ENCODE measurements at regions of chr10 and their contacts with region 1.

Region 1: DNA sequence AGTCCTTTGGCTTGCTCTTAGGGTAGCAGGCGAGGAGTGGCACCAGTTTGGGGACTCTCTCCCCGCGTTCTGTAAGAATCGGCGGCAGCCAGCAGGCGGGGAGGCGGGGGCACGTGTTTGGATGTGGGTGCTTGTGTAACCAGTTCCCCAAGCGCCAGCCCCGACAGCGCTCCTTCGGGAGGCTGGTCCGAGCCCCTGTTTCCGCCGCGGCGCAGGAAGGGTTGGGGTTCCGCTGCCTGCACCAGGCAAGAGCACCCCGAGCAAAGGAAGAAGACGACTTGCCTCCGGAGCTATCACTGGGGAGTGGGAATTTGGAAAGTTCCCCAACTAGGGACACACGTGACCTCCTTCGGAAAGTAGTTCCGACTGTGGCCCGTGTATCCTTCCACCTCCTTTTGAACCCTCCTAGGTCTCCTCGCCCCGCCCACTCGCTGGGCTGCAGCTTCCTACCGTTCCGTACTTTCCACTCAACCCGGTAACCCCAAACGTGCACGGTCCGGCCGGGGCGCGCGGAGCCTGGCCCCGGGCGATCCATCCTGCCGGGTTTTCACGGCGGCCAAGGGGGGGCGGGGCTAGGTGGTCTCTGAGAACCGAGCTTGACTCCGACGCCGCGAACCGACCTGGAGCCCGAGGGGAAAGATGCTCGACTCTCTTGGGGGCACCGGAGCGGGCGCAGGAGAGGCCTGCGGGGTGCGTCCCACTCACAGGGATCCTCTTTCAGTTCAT is 1.2 kb downstream of the KLLN start:
- DNase-seq: peak; percentile 99 to 100 (median 100)
- H3K4me3 ChIP-seq: peak overlapping the region; percentile 63 to 99 (median 95)
- H3K27ac ChIP-seq: peak overlapping the region; percentile 77 to 88
- H3K4me1 ChIP-seq: peaks cover 8 to 25% (median 20%) of the 10 kb centered on the region in 4 experiments
- H3K27me3 ChIP-seq: no peaks in the 10 kb centered on the region

Region 2: DNA sequence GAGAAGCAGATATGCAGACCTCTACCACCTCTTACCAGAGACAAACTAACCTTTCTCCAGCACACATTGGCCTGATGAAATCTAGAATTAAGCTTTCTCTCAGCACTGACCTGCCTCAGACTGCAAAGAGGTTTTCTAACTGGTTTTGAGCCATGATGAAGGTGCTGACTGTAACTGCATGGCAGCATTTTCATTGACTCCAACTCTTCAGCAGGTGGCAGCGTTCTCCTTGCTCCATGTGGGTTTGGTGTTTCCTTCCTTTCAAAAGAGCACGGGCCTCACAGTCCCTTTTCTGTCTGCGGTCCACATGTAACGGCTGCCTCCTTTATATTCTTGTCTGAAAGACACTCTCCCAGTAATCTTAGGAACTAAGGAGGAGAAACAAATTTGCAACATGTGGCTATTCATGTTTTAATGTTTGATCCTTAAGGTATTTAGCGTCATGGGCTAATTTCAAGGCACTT is 11.3 kb before region 1 on chr10:
- CTCF ChIA-PET with region 1: interaction called, 23 read pairs
- POLR2A ChIA-PET with region 1: interaction called, 3 read pairs
- DNase-seq: peak; percentile 75 to 85 (median 83)
- H3K4me3 ChIP-seq: peak overlapping the region in 1 of 7 experiments; percentile 3
- H3K27ac ChIP-seq: no peak overlapping the region
- H3K4me1 ChIP-seq: peaks cover 5 to 17% (median 11%) of the 10 kb centered on the region in 4 experiments
- H3K27me3 ChIP-seq: no peaks in the 10 kb centered on the region

Region 3: DNA sequence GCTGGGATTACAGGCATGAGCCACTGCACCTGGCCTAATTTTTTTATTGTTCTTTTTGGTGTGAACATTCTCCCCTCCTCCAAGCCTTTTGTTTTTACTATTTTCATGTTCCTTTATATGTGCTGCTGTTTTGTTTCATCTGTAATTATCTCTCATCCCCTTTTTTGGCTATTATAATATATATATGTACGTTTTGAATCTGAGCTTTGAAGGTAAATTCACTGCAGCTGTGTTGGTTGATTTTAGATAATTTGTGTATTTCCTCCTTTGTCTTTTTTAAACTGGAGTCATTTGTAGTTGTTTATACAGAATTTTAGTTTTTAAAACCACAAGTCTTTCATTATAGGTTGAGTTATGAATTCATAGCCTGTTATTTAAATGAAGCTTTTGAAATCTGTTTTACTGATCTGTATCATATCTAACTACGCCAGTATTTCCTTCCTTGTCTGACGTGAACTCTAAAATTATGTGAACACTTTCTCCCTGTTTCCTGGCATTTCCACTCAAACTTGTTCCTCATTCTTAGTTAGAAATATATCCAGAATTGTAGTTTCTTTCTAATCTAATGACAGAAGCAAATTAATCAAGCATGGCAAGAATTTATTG is 56.2 kb after region 1 on chr10:
- CTCF ChIA-PET with region 1: interaction called, 13 read pairs
- POLR2A ChIA-PET with region 1: interaction called, 6 read pairs
- DNase-seq: peak; percentile 78 to 90 (median 78)
- H3K4me3 ChIP-seq: peak overlapping the region in 3 of 7 experiments; percentile 11 to 37 (median 14)
- H3K27ac ChIP-seq: peak overlapping the region; percentile 47 to 77
- H3K4me1 ChIP-seq: peaks cover 24 to 60% (median 38%) of the 10 kb centered on the region in 4 experiments
- H3K27me3 ChIP-seq: no peaks in the 10 kb centered on the region

Region 4: DNA sequence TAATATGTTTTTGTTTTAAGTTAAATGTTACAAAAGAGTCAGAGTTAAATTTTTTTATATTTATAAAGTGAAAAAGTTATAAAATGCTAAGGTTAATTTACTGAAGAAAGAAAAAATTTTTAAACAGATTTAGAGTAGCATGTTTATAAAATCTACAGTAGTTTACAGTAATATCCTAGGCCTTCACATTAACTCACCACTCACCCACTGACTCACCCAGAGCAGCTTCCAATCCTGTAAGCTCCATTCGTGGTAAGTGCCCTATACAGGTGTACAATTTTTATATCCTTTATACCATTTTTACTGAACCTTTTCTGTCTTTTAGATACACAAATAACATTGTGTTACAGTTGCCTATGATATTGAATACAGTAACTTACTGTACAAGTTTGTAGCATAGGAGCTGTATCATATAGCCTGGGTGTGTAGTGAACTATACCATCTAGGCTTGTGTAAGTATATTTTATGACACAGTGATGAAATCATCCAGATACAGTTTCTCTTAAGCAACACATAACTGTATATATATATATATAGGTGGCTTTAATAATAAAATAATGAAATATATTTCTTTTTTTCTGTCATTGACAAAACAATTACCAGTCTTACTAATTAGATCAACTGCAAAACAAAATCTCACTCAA is 80.9 kb after region 1 on chr10:
- CTCF ChIA-PET with region 1: interaction called, 10 read pairs
- POLR2A ChIA-PET with region 1: interaction called, 19 read pairs
- DNase-seq: no peak
- H3K4me3 ChIP-seq: no peak overlapping the region
- H3K27ac ChIP-seq: no peak overlapping the region
- H3K4me1 ChIP-seq: no peaks in the 10 kb centered on the region
- H3K27me3 ChIP-seq: no peaks in the 10 kb centered on the region

Region 5: DNA sequence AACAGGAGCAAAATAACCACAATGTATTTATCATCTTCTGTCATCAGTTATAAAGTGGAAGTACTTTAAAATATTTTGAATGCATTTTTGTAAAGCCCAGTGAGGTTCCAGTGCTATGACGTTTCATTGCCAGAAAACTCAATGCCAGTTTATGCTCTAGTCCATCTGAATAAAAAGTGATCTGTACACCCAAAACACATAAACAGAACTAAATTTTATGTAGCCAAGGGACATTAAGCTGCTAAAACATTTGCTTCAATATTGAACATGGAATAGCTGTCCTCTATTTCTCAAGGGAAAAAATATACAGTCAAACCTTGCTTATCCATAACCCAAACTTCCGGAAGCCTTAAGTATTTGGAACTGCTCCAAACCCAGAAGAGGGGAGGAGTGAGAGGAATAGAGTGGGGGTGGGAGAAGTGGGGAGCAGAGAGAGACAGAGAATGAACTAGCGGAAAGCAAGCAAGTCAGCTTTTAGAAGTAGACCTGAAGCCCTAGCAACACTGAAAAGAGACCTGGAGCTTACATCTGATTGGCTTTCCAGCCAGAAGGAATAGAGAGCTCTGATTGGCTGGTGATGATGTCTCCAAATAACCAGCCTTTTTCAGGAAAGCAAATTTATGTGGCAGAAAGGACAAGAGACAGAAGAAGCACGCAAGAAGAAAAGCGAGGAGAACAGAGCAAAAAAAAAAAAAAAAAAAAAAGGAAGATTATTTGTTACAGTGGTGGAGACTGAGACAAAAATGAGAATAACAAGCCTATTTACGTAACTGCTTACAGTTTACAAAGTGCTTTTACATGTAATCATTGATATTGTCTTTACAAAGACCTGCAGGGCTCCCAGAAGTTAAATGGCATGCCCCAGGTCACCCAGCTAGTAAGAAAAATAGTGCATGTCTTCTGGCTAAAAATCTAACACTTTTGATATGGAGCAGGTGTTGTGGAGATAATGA is 525.0 kb after region 1 on chr10:
- CTCF ChIA-PET with region 1: interaction called, 54 read pairs
- POLR2A ChIA-PET with region 1: interaction called, 13 read pairs
- DNase-seq: peak; percentile 91 to 97 (median 97)
- H3K4me3 ChIP-seq: peak overlapping the region in 5 of 7 experiments; percentile 9 to 63 (median 52)
- H3K27ac ChIP-seq: peak overlapping the region; percentile 99
- H3K4me1 ChIP-seq: peaks cover 52 to 80% (median 70%) of the 10 kb centered on the region in 4 experiments
- H3K27me3 ChIP-seq: no peaks in the 10 kb centered on the region

Region 6: GRCh38 chr10:88553116-88553752 is 691.1 kb after region 1 on chr10:
- CTCF ChIA-PET with region 1: interaction called, 29 read pairs
- POLR2A ChIA-PET with region 1: no interaction called
- DNase-seq: peak; percentile 83 to 92 (median 92)
- H3K4me3 ChIP-seq: no peak overlapping the region
- H3K27ac ChIP-seq: no peak overlapping the region
- H3K4me1 ChIP-seq: no peaks in the 10 kb centered on the region
- H3K27me3 ChIP-seq: no peaks in the 10 kb centered on the region

Measured in common myeloid progenitor, CD34-positive (primary cell).